ENCODE measurements at regions of chr4 and their contacts with region 1.

Region 1: GRCh38 chr4:185304944-185305690 is 90.6 kb downstream of the LRP2BP start:
- DNase-seq: peak; percentile 28
- H3K4me3 Mint-ChIP-seq: no peak overlapping the region
- H3K27ac Mint-ChIP-seq: peak overlapping the region; percentile 49
- H3K4me1 Mint-ChIP-seq: peaks cover 23% of the 10 kb centered on the region
- H3K27me3 Mint-ChIP-seq: no peaks in the 10 kb centered on the region
- CTCF ChIP-seq: no peak

Region 2: DNA sequence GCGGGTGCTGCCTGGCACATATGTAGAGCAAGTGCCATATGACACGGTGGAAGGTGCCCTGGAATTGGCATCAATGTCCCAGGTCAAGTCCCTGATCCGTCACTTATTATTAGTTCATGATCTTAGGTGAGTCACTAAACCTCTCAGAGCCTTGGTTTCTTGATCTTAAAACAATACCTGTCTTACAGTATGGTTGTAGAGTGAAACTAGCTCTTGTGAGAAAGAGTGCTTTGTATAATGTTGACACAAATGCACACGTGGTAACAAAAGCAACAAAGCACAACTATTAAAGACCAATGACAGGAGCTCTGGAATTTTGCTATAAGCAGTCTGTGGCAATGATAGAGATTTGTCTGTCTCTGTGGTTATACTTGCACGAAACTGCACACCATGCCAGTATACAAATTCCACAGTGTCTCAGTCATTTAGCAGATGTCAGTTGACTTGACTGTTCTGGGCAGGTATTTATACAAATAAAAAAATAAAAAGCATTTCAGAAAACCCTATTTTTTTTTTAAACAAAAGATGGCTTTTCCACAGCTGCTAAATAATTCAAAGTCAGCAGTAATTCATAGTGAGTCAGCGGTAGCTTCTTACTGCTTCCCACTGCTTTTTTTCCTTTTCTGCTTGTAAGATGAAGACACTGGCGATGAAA is 459.6 kb before region 1 on chr4:
- CTCF ChIA-PET with region 1: no interaction called
- intact Hi-C with region 1: no loop called
- DNase-seq: peak; percentile 41
- H3K4me3 Mint-ChIP-seq: no peak overlapping the region
- H3K27ac Mint-ChIP-seq: peak overlapping the region; percentile 60
- H3K4me1 Mint-ChIP-seq: peaks cover 27% of the 10 kb centered on the region
- H3K27me3 Mint-ChIP-seq: no peaks in the 10 kb centered on the region
- CTCF ChIP-seq: no peak

Region 3: DNA sequence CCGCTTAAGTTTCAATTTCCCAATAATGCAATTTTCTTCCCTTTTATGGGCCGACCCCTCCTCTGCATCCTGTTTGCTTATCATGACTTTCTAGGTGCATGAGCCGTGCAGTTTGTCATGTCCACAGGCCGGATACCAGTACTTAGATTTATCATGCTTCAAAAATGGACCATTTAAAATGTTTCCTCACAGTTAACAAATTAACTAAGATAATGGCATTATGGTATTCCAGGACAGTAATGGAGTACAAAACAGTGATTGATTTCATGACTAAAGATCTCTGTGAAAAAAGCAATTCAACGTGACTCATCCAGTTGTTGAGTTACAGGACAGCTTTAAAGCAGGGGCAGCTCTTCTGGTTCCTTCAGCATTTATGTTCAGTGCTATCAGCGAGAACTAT is 72.7 kb before region 1 on chr4:
- CTCF ChIA-PET with region 1: no interaction called
- intact Hi-C with region 1: loop called (anchors 5 kb)
- DNase-seq: peak; percentile 13
- H3K4me3 Mint-ChIP-seq: peak overlapping the region; percentile 36
- H3K27ac Mint-ChIP-seq: peak overlapping the region; percentile 75
- H3K4me1 Mint-ChIP-seq: peaks cover 21% of the 10 kb centered on the region
- H3K27me3 Mint-ChIP-seq: no peaks in the 10 kb centered on the region
- CTCF ChIP-seq: no peak